H1 (cell line): ENCODE measurements at regions of chr4 and their contacts with region 1.

Region 1: GRCh38 chr4:113292371-113293042 is 243.1 kb downstream of the ANK2 start:
- DNase-seq: peak; percentile 80 to 84
- H3K4me3 ChIP-seq: peak overlapping the region; percentile 12 to 40 (median 28); a peak in 5 of 8 replicates
- H3K27ac ChIP-seq: peak overlapping the region; percentile 84
- H3K4me1 ChIP-seq: peaks cover 11 to 33% (median 20%) of the 10 kb centered on the region in 4 experiments
- H3K27me3 ChIP-seq: no peaks in the 10 kb centered on the region
- CTCF ChIP-seq: no peak
- EP300 ChIP-seq: peak in 1 of 2 experiments; percentile 2; a peak in 1 of 3 replicates
- POLR2A ChIP-seq: peak; percentile 30 to 57; a peak in 2 of 3 replicates
- RAD21 ChIP-seq: no peak

Region 2: GRCh38 chr4:113272523-113272922 is 20.0 kb before region 1 on chr4:
- CTCF ChIA-PET with region 1: interaction called, 78 read pairs
- POLR2A ChIA-PET with region 1: no interaction called
- DNase-seq: no peak
- H3K4me3 ChIP-seq: no peak overlapping the region
- H3K27ac ChIP-seq: no peak overlapping the region
- H3K4me1 ChIP-seq: peaks cover 6 to 19% (median 15%) of the 10 kb centered on the region in 4 experiments; a peak in 5 of 7 replicates
- H3K27me3 ChIP-seq: no peaks in the 10 kb centered on the region
- CTCF ChIP-seq: no peak
- EP300 ChIP-seq: no peak
- POLR2A ChIP-seq: no peak
- RAD21 ChIP-seq: no peak

Region 3: DNA sequence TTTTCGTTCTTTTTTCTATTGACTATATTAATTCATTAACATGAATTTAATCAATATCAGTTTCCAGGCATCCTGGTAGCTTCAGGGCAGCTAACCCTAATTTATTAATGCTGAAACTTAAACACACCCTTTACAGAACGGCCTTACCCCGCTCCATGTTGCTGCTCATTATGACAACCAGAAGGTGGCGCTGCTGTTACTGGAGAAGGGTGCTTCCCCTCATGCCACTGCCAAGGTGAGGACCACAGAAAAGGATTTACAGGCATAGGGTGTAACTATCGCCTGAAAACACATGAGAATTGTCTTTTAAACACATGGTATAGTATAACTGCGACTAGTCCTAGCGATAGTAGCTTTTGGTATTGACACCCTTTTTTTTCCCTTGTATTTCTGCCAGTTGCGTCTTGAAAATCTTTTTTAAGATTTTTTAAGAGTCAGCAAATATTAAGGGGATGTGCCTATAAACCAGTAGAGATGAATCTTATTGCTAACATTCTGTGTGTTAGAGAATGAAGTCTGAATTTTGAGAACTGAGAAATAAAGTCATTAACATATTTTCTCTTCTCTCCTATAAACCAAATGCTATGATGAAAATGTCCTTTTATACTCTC is 14.1 kb before region 1 on chr4:
- CTCF ChIA-PET with region 1: interaction called, 78 read pairs
- POLR2A ChIA-PET with region 1: interaction called, 10 read pairs
- DNase-seq: peak; percentile 31 to 80
- H3K4me3 ChIP-seq: no peak overlapping the region
- H3K27ac ChIP-seq: no peak overlapping the region
- H3K4me1 ChIP-seq: no peaks in the 10 kb centered on the region
- H3K27me3 ChIP-seq: no peaks in the 10 kb centered on the region
- CTCF ChIP-seq: peak; percentile 88 to 98 (median 97)
- EP300 ChIP-seq: no peak
- POLR2A ChIP-seq: no peak
- RAD21 ChIP-seq: peak; percentile 93 to 94